Heart left ventricle (tissue), 16 donors: ENCODE measurements at regions of chr10 and their contacts with region 1.

Region 1: GRCh38 chr10:28432210-28432676 is 100.7 kb upstream of the WAC start:
- DNase-seq: peak in 4 of 5 donors; percentile 59 to 71 (median 63)
- ATAC-seq: peak; percentile 42 to 90 (median 87)
- H3K4me3 ChIP-seq: peak overlapping the region in 1 of 12 donors; percentile 11
- H3K27ac ChIP-seq: no peak overlapping the region
- H3K4me1 ChIP-seq: peaks cover 0 to 8% (median 0%) of the 10 kb centered on the region in 12 donors
- H3K27me3 ChIP-seq: no peaks in the 10 kb centered on the region
- CTCF ChIP-seq: peak; percentile 66 to 86 (median 79)
- POLR2A ChIP-seq: no peak

Region 2: DNA sequence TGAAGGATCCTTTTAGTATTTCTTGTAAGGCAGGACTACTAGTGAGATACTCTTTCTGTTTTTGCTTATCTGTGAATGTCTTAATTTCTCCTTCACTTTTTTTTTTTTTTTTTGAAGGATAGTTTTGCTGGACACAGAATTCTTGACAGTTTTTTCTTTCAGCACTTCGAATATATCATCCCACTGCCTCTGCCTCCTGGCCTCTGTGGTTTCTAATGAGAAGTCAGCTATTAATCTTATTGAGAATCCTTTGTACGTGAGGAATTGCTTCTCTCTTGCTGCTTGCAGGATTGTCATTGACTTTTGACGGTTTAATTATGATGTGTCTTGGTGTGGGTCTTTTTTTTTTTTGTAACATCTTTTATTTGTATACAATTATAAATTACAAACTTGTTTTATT is 88.1 kb after region 1 on chr10:
- intact Hi-C with region 1: loop called in 1 of 10 experiments (anchors 10 kb)
- DNase-seq: no peak
- ATAC-seq: no peak
- H3K4me3 ChIP-seq: no peak overlapping the region
- H3K27ac ChIP-seq: no peak overlapping the region
- H3K4me1 ChIP-seq: no peaks in the 10 kb centered on the region
- H3K27me3 ChIP-seq: no peaks in the 10 kb centered on the region
- CTCF ChIP-seq: no peak
- POLR2A ChIP-seq: no peak

Region 3: DNA sequence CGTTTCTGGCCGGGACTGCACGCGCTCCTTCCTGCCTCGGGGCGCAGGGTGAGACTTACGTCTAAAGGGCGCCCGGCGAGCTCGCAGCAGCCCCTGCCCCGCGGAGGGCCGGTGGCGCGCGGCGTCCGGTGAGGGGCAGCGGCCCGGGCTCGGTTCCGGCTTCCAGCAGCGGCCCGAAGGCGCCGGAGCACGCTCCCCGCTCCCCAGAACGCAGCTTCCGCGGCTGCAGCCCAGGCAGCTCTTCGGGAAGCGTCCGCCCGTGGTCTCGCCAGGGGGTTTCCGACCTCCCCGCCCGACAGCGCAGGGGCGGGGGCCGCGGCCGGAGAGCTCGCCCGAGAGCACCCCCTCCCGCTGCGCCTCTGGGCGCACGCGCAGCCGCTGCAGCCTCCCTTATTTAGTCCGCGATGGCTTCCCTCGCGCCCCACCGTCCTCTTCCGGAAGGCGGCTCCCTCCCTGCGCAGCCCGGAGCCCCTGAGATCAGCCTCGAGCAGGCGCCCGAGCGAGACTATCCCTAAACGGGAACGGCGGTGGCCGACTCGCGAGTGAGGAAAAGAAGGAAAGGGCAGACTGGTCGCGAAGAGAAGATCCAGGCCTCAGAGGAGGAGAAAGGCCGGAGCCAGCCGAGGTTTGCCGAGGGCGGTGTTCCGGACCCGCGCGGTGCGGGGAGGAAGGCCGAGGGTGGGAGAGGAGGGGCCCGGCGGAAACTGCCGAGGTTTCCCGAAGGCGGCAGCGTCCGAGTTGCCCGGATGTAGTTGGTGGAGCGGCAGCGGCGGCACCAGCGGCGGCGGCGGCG is 100.3 kb after region 1 on chr10 and contains the start of gene WAC:
- intact Hi-C with region 1: loop called in 7 of 10 experiments (anchors 1 to 10 kb)
- DNase-seq: peak; percentile 97 to 99 (median 97)
- ATAC-seq: peak; percentile 95 to 97 (median 96)
- H3K4me3 ChIP-seq: peak within 1 kb of the TSS; percentile 78 to 99 (median 95)
- H3K27ac ChIP-seq: peak within 1 kb of the TSS; percentile 96 to 100 (median 100)
- H3K4me1 ChIP-seq: peaks cover 0 to 56% (median 29%) of the 10 kb centered on the region in 12 donors
- H3K27me3 ChIP-seq: no peaks in the 10 kb centered on the region
- CTCF ChIP-seq: peak in 4 of 12 donors; percentile 13 to 41 (median 26)
- POLR2A ChIP-seq: peak in 1 of 2 donors; percentile 80
- total RNA-seq, gene WAC: 83.6 to 124 (median 104) TPM

Region 4: GRCh38 chr10:28569506-28570159 is 137.4 kb after region 1 on chr10:
- intact Hi-C with region 1: loop called in 1 of 10 experiments (anchors 10 kb)
- DNase-seq: no peak
- ATAC-seq: no peak
- H3K4me3 ChIP-seq: no peak overlapping the region
- H3K27ac ChIP-seq: no peak overlapping the region
- H3K4me1 ChIP-seq: peaks cover 0 to 89% (median 61%) of the 10 kb centered on the region in 12 donors
- H3K27me3 ChIP-seq: no peaks in the 10 kb centered on the region
- CTCF ChIP-seq: no peak
- POLR2A ChIP-seq: no peak

Region 5: GRCh38 chr10:28587970-28588290 is 155.7 kb after region 1 on chr10:
- intact Hi-C with region 1: loop called in 8 of 10 experiments (anchors 5 to 10 kb)
- DNase-seq: peak in 1 of 5 donors; percentile 18
- ATAC-seq: peak; percentile 84 to 90 (median 86)
- H3K4me3 ChIP-seq: no peak overlapping the region
- H3K27ac ChIP-seq: peak overlapping the region in 9 of 12 donors; percentile 5 to 53 (median 15)
- H3K4me1 ChIP-seq: peaks cover 6 to 52% (median 32%) of the 10 kb centered on the region in 12 donors
- H3K27me3 ChIP-seq: no peaks in the 10 kb centered on the region
- CTCF ChIP-seq: peak in 9 of 12 donors; percentile 15 to 54 (median 35)
- POLR2A ChIP-seq: no peak

Region 6: DNA sequence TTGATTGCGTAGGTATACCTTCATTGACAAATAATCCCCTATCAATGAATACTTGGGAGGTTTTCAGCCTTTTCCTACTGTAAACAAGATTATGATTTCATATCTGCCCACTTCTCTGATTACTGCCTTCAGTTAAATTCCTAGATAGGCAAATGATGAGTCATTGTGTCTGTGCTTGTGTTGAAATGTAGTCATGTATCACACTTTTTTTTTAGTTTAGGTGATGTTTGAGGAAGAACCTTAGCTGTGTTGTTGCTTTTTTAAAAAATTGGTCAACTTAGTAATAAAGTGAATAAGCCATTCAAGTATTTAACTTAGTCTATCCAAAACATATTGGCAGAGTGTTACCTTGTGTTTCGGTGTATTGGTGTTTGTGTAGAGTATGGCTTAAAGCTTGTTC is 160.7 kb after region 1 on chr10:
- intact Hi-C with region 1: loop called in 8 of 10 experiments (anchors 5 to 10 kb)
- DNase-seq: no peak
- ATAC-seq: peak in 2 of 4 donors; percentile 19 to 31
- H3K4me3 ChIP-seq: no peak overlapping the region
- H3K27ac ChIP-seq: no peak overlapping the region
- H3K4me1 ChIP-seq: peaks cover 2 to 50% (median 33%) of the 10 kb centered on the region in 12 donors
- H3K27me3 ChIP-seq: no peaks in the 10 kb centered on the region
- CTCF ChIP-seq: no peak
- POLR2A ChIP-seq: no peak

Region 7: GRCh38 chr10:28628184-28628893 is 196.1 kb after region 1 on chr10:
- intact Hi-C with region 1: loop called in 1 of 10 experiments (anchors 5 kb)
- DNase-seq: peak; percentile 68 to 86 (median 76)
- ATAC-seq: peak; percentile 28 to 93 (median 88)
- H3K4me3 ChIP-seq: no peak overlapping the region
- H3K27ac ChIP-seq: no peak overlapping the region
- H3K4me1 ChIP-seq: peaks cover 0 to 8% (median 0%) of the 10 kb centered on the region in 12 donors
- H3K27me3 ChIP-seq: peaks cover 0 to 10% (median 0%) of the 10 kb centered on the region in 9 donors
- CTCF ChIP-seq: peak; percentile 77 to 98 (median 85)
- POLR2A ChIP-seq: no peak